Caco-2 (cell line): ENCODE measurements at regions of chr1 and their contacts with region 1.

Region 1: DNA sequence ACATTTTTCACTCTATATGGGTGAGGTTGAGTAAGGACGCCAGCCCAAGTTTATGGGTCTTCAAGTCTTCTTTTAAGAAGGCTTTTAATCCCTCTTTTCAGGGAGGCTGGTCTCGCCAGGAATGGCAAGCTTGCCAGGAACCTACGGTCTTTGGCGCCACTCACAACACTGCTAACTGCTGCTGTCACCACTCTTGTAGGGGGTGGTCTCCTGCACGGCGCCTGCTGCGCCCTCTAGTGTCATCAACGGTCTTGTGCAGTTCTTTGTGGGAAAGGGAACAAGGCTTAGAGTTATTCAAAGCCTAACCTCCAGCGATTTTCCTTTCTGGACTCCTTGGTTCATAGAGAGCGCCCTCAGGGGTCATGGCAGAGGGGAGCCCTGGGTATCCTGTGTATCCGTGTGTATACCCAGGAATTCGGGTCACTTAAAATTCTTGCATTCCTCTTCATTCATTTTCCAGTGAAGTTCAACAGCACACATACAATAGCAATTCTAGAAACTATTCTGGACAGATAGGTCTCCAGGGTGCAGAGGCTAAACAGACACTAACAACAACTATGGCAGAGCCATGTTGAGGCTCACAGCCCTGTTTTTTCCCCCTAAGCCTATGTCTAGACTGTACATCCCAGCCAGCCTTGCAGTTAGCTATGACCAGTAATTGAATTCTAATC is 392.8 kb upstream of the CAMK1G start:
- DNase-seq: peak; percentile 60 to 66
- H3K4me3 ChIP-seq: no peak overlapping the region
- H3K4me3 Mint-ChIP-seq: no peak overlapping the region
- H3K27ac Mint-ChIP-seq: no peak overlapping the region
- H3K4me1 ChIP-seq: 0 out of 2 replicates have a peak, but pooled peaks cover 3% of the 10 kb centered on the region
- H3K4me1 Mint-ChIP-seq: no peaks in the 10 kb centered on the region
- H3K27me3 ChIP-seq: no peaks in the 10 kb centered on the region
- H3K27me3 Mint-ChIP-seq: no peaks in the 10 kb centered on the region
- CTCF ChIP-seq: peak; percentile 71 to 74

Region 2: DNA sequence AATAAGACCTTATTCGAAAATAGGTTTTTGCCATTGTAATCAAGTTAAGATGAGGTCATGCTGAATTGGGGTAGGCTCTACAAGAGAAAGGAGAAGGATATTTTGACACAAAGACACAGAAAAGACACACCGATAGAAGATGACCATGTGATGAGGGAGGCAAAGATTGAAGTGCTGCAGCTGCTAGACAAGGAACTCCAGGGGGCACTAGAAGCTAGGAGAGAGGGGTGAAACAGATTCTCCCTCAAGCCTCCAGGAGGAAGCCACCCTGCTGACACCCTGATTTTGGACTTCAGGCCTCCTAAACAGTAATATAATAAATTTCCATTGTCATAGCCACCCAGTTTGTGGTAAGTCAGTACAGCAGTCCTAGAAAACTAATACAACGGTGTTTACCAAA is 114.0 kb before region 1 on chr1:
- CTCF ChIA-PET with region 1: no interaction called
- POLR2A ChIA-PET with region 1: no interaction called
- intact Hi-C with region 1: loop called (anchors 1 kb)
- DNase-seq: peak in 1 of 2 experiments; percentile 12
- H3K4me3 ChIP-seq: no peak overlapping the region
- H3K4me3 Mint-ChIP-seq: no peak overlapping the region
- H3K27ac Mint-ChIP-seq: no peak overlapping the region
- H3K4me1 ChIP-seq: no peaks in the 10 kb centered on the region
- H3K4me1 Mint-ChIP-seq: peaks cover 9% of the 10 kb centered on the region
- H3K27me3 ChIP-seq: no peaks in the 10 kb centered on the region
- H3K27me3 Mint-ChIP-seq: no peaks in the 10 kb centered on the region
- CTCF ChIP-seq: peak; percentile 36

Region 3: GRCh38 chr1:209095627-209096595 is 94.8 kb before region 1 on chr1:
- CTCF ChIA-PET with region 1: no interaction called
- POLR2A ChIA-PET with region 1: no interaction called
- intact Hi-C with region 1: loop called (anchors 5 kb)
- DNase-seq: peak; percentile 56 to 59
- H3K4me3 ChIP-seq: no peak overlapping the region
- H3K4me3 Mint-ChIP-seq: no peak overlapping the region
- H3K27ac Mint-ChIP-seq: no peak overlapping the region
- H3K4me1 ChIP-seq: peaks cover 7% of the 10 kb centered on the region
- H3K4me1 Mint-ChIP-seq: peaks cover 10% of the 10 kb centered on the region
- H3K27me3 ChIP-seq: no peaks in the 10 kb centered on the region
- H3K27me3 Mint-ChIP-seq: peaks cover 3% of the 10 kb centered on the region
- CTCF ChIP-seq: no peak